A549 (cell line): ENCODE measurements at regions of chr1 and their contacts with region 1.

Region 1: DNA sequence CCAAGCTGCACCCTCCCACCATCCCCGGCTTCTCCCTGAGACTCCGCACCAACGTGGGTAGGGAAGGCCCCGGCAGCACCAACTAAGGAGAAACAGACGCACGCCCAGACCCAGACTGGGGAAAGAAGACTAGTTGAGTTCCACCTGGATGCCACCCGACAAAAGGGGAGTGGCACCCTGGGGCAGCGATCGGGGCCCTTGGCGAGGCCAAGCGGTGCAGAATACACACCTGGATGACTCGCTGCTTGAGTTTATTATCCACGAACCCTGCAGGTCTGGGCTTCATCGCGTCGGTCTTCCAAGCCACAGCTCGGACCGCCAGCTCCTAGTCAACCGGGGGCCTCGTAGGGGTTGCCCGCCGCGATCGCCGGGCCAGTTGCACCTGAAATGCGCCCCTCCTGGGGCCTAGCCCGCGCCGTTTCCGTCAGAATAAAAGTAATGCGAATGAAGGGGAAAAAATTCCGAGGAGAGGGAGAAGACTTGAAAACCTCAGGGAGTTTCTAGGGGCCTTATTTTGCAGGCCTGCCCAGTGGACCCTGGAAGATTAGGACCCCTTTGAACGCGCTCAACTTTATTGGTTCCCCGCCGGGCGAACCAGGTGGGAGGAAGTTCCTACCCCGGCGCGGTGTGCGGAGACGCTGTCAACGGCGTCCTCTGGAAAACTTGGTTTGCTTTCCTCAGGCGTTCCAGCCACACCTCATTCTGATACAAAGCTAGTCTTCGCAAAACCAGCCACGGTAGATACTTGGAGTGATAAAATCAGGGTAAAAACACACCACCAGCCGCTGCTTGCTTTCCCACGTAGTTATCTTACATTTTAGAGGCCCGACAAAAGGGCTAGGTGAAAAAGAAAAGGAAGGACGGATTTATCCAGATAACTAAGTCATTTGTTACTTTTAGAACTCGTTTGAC is at the start of gene NVL:
- DNase-seq: peak; percentile 91 to 92
- ATAC-seq: peak; percentile 97
- H3K4me3 ChIP-seq: peak within 1 kb of the TSS; percentile 80
- H3K27ac ChIP-seq: peak within 1 kb of the TSS; percentile 92 to 95
- H3K4me1 ChIP-seq: peaks cover 13% of the 10 kb centered on the region
- CTCF ChIP-seq: no peak
- EP300 ChIP-seq: no peak
- POLR2A ChIP-seq: peak; percentile 38; the same call in 1 of the 2 replicates
- RAD21 ChIP-seq: no peak; a peak in 2 of 5 replicates
- polyA plus RNA-seq, gene NVL: 20.7 and 28.6 TPM in 2 replicates

Region 2: GRCh38 chr1:224113918-224114786 is 215.9 kb before region 1 on chr1 and contains the start of gene FBXO28:
- CTCF ChIA-PET with region 1: interaction called, 38 read pairs
- POLR2A ChIA-PET with region 1: interaction called, 4 read pairs
- DNase-seq: peak; percentile 96 to 98
- ATAC-seq: peak; percentile 100
- H3K4me3 ChIP-seq: peak within 1 kb of the TSS; percentile 86
- H3K27ac ChIP-seq: peak within 1 kb of the TSS; percentile 96
- H3K4me1 ChIP-seq: peaks cover 14% of the 10 kb centered on the region; the same call in 2 of the 3 replicates
- CTCF ChIP-seq: no peak
- EP300 ChIP-seq: no peak
- POLR2A ChIP-seq: peak; percentile 97
- RAD21 ChIP-seq: no peak
- polyA plus RNA-seq, gene FBXO28: 25.6 and 31.5 TPM in 2 replicates

Region 3: DNA sequence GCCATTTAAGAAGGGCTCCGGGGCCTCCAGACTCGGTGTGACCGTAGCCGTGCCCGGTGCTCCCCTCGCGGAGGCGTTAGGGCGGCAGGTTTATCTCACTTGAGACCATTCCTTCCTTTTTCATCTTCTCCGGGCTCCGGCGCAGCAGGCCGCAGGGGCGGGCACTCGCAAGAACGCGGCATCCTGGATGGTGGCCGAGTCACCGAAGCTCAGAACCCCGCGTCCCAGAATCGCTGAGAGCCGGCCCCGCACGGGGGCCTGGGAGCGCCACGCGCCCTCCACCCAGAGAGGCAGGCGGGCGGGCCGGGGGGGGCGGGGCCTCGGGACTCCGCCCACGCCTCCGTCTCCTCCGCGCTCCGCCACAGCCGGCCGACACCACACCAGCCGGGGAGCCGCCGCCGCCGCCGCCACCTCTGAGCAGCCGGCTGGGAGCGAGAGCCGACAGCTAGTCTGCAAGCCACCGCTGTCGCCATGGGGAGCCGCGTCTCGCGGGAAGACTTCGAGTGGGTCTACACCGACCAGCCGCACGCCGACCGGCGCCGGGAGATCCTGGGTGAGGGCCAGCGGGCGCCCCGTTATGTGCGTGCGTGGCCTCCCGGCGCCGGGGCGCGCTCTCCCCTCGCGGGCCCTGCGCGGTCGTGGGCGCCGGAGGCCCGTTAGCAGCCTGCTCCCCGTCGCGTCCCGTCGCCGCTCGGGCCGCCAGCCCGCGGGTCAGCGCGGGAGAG is 147.1 kb before region 1 on chr1 and contains the start of gene DEGS1:
- CTCF ChIA-PET with region 1: interaction called, 4 read pairs
- POLR2A ChIA-PET with region 1: interaction called, 11 read pairs
- DNase-seq: peak; percentile 83 to 94
- ATAC-seq: peak; percentile 94 to 95
- H3K4me3 ChIP-seq: peak within 1 kb of the TSS; percentile 93
- H3K27ac ChIP-seq: peak within 1 kb of the TSS; percentile 96 to 97
- H3K4me1 ChIP-seq: peaks cover 11% of the 10 kb centered on the region; the same call in 2 of the 3 replicates
- CTCF ChIP-seq: no peak
- EP300 ChIP-seq: no peak
- POLR2A ChIP-seq: peak; percentile 75
- RAD21 ChIP-seq: no peak
- polyA plus RNA-seq, gene DEGS1: 99.3 and 112 TPM in 2 replicates

Region 4: DNA sequence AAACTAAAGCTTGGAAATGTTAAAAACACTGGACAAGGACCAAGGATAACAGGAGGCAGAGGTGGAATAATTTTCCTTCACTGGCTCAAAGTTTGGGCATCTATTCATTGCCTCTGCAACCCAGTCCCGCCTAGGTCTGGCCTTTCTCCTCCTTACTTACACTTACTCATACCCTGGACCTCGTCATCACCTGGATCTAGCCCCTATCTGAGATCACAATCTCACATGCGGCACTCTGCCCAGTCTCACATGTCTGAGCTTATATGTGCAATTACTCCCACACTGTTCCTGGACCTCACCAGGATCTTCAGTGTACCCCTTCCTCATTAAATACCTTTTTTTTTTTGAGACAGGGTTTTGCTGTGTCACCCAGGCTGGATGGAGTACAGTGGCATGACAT is 37.7 kb before region 1 on chr1:
- CTCF ChIA-PET with region 1: no interaction called
- POLR2A ChIA-PET with region 1: no interaction called
- DNase-seq: no peak
- ATAC-seq: no peak
- H3K4me3 ChIP-seq: no peak overlapping the region
- H3K27ac ChIP-seq: no peak overlapping the region
- H3K4me1 ChIP-seq: no peaks in the 10 kb centered on the region
- CTCF ChIP-seq: no peak
- EP300 ChIP-seq: no peak
- POLR2A ChIP-seq: no peak
- RAD21 ChIP-seq: no peak

Region 5: DNA sequence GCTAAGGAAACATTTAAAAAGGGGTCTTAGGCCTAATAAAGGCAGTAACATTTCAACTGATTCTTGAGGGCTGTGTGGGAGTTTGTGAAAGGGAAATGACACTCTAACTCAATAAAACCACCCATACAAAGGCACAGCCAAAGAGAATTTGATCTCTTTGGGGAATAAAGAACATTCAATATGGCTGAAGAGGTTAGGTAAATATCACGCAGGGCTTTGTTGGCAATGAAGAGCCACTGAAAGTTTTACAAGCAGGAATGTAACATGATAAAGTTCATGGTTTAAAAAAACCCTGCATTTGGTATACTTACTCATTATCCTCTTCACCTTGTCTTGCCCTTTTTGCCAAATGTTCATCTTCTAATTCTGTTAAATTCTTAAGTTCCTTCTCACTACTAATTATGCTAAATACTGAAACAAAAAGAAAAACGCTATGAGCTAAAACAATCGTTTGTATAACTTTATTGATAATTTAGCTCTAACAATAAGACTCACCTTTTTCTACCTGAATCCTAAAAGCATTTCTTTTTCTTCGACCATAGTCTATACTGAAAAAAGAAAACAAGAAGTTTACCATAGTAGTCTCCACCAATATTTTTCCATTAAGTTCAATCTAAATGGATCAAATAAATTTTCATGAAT is 12.6 kb before region 1 on chr1:
- CTCF ChIA-PET with region 1: interaction called, 13 read pairs
- POLR2A ChIA-PET with region 1: no interaction called
- DNase-seq: no peak
- ATAC-seq: no peak
- H3K4me3 ChIP-seq: no peak overlapping the region
- H3K27ac ChIP-seq: no peak overlapping the region
- H3K4me1 ChIP-seq: no peaks in the 10 kb centered on the region
- CTCF ChIP-seq: no peak
- EP300 ChIP-seq: no peak
- POLR2A ChIP-seq: no peak
- RAD21 ChIP-seq: no peak

Region 6: DNA sequence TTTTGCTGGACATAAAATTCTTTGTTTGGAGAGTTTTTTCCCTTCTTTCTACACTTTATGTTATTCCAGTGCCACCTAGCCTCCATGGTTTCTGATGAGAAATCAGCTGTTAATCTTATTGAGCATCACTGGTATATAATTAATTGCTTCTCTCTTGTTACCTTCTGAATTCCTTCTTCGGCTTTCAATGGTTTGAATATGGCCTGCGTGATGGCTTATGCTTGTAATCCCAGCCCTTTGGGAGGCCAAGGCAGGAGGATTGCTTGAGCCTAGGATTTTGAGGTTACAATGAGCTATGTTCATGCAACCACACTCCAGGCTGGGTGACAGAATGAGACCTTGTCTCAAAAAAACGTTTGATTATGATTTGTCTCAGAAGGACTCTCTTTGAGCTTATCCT is 13.6 kb after region 1 on chr1:
- CTCF ChIA-PET with region 1: interaction called, 15 read pairs
- POLR2A ChIA-PET with region 1: interaction called, 3 read pairs
- DNase-seq: peak in 1 of 2 experiments; percentile 34
- ATAC-seq: no peak
- H3K4me3 ChIP-seq: no peak overlapping the region
- H3K27ac ChIP-seq: no peak overlapping the region
- H3K4me1 ChIP-seq: peaks cover 7% of the 10 kb centered on the region
- CTCF ChIP-seq: no peak
- EP300 ChIP-seq: no peak
- POLR2A ChIP-seq: no peak
- RAD21 ChIP-seq: no peak